Testis (tissue), 5 donors: ENCODE measurements at regions of chr15 and their contacts with region 1.

Region 1: DNA sequence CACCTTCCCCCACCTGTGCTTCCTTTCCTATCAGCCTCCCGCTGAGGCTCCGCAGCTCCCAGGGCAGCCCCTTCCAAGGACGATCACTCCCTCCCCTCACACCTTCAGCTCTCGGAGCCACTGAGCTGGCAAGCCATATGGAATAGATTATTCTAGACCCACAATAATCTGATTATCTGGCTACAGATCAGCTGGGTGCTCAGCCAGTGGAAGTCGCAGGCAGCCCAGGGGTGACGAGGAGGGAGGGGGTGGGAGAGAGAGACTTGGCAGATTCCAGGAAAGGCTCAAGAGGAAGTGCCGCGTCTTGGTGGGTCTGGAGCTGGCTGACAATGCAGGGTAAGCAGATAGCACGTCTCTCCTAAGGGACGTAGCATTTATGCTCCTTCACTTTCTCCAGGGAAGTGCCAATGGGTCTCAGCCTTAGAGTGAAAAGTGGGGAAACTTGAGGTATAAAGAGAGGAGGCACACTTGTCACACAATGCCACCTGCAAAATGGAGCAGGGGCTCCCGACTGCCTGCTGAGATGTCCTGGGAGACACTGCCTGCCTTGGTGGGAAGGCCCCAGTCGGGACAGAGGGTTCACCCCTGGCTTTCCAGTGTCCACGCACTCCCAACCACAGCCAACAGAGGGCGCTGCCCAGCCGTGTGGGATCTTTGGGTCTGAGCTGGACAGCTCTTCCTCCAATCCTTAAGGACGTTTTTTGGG is 9.4 kb upstream of the MESP1 start:
- DNase-seq: peak; percentile 84
- H3K4me3 ChIP-seq: no peak overlapping the region
- H3K27ac ChIP-seq: no peak overlapping the region
- H3K4me1 ChIP-seq: no peaks in the 10 kb centered on the region
- H3K27me3 ChIP-seq: no peaks in the 10 kb centered on the region
- CTCF ChIP-seq: peak; percentile 80 to 92 (median 85)
- POLR2A ChIP-seq: no peak

Region 2: GRCh38 chr15:89836255-89837133 is 76.0 kb after region 1 on chr15:
- intact Hi-C with region 1: no loop called
- DNase-seq: no peak
- H3K4me3 ChIP-seq: no peak overlapping the region
- H3K27ac ChIP-seq: no peak overlapping the region
- H3K4me1 ChIP-seq: no peaks in the 10 kb centered on the region
- H3K27me3 ChIP-seq: no peaks in the 10 kb centered on the region
- CTCF ChIP-seq: no peak
- POLR2A ChIP-seq: no peak

Region 3: DNA sequence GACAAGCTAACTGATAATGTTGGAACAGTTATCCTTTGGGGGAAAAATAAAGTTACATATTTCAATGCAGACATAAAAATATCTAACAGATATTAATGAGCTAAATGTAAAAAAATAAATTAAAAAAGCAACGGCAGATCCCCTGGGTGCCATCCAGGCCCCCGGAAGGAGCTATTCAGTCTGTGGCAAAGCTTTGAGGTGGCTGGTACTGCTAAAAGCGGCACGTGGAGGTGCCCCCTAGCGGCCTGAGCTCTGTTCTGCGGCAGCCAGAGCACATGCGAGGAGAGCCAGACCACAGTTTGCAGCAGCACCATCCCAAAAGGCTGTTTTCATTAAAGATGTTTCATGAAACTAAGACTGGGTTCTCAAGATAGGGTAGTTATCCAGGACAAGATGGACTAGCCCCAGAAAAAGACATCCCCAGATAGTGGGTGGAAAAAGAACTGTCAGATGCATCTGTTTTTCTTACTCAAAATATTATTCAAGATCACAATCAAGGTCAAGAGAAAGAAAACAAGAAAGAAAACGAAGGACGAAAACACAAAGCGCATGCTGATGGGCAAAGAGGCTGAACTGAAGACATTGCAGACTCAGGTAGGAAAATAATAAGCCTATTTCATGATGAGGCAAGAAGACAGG is 114.6 kb after region 1 on chr15:
- intact Hi-C with region 1: loop called (anchors 10 kb)
- DNase-seq: peak; percentile 86
- H3K4me3 ChIP-seq: no peak overlapping the region
- H3K27ac ChIP-seq: no peak overlapping the region
- H3K4me1 ChIP-seq: peaks cover 3% of the 10 kb centered on the region
- H3K27me3 ChIP-seq: no peaks in the 10 kb centered on the region
- CTCF ChIP-seq: peak; percentile 54 to 81 (median 75)
- POLR2A ChIP-seq: no peak